Activated CD8-positive, alpha-beta T cell treated with anti-CD3 and anti-CD28 coated beads, Interleukin-2, amount 10 ng/mL, durations not matched to agents 7 days and 5 days (primary cell): ENCODE measurements at regions of chr13 and their contacts with region 1.

Region 1: GRCh38 chr13:29935309-29935981 is 85.0 kb upstream of the UBL3 start:
- DNase-seq: peak; percentile 90
- ATAC-seq: peak; percentile 95
- H3K4me3 Mint-ChIP-seq: peak overlapping the region; percentile 83
- H3K27ac Mint-ChIP-seq: peak overlapping the region; percentile 95
- H3K4me1 Mint-ChIP-seq: peaks cover 44% of the 10 kb centered on the region
- H3K27me3 Mint-ChIP-seq: peaks cover 1% of the 10 kb centered on the region

Region 2: DNA sequence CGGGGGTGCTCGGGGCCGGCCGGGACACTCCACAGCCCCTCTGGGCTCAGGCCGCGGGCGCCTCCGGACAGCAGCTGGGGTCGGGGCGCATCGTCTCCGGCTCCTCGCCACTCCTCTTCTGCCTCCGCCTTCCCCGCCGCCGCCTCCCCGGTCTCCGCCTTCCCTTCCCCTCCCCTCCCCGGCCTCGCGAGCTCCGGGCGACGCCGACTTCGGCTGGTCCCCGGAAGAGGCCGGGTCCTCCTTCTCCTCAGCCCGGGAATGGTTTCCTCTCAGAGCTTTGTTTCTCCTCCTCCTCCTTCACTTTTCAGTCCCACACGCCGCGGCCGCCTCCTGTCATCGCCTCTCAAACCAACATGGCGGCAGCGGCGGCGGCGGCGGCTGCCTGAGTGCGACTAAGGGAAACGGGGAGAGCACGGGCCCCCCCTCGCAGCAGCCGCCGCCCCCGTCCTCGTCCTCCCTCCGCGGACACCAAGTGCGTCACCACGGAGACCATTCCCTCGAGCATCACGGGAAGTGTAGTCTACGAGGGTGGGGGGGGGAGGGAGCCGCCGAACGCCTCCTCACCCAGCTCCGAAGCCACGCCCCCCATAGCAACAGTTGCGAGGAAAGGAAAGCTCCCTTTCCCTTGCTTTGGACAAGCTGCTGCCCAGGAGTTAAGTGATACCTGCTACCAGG is 85.1 kb before region 1 on chr13 and contains the start of gene UBL3:
- CTCF ChIA-PET with region 1: interaction called, 29 read pairs
- POLR2A ChIA-PET with region 1: interaction called, 20 read pairs
- DNase-seq: peak; percentile 96
- ATAC-seq: peak; percentile 89
- H3K4me3 Mint-ChIP-seq: peak within 1 kb of the TSS; percentile 86
- H3K27ac Mint-ChIP-seq: peak within 1 kb of the TSS; percentile 99
- H3K4me1 Mint-ChIP-seq: peaks cover 35% of the 10 kb centered on the region
- H3K27me3 Mint-ChIP-seq: no peaks in the 10 kb centered on the region
- total RNA-seq, gene UBL3: 7.3 to 8.4 TPM

Region 3: GRCh38 chr13:29954082-29955028 is 18.9 kb after region 1 on chr13:
- CTCF ChIA-PET with region 1: interaction called, 43 read pairs
- POLR2A ChIA-PET with region 1: interaction called, 24 read pairs
- DNase-seq: peak; percentile 75
- ATAC-seq: peak; percentile 96
- H3K4me3 Mint-ChIP-seq: peak overlapping the region; percentile 69
- H3K27ac Mint-ChIP-seq: peak overlapping the region; percentile 88
- H3K4me1 Mint-ChIP-seq: peaks cover 52% of the 10 kb centered on the region
- H3K27me3 Mint-ChIP-seq: peaks cover 2% of the 10 kb centered on the region

Region 4: GRCh38 chr13:30078059-30078458 is 142.6 kb after region 1 on chr13:
- CTCF ChIA-PET with region 1: no interaction called
- POLR2A ChIA-PET with region 1: no interaction called
- DNase-seq: peak; percentile 10
- ATAC-seq: no peak
- H3K4me3 Mint-ChIP-seq: no peak overlapping the region
- H3K27ac Mint-ChIP-seq: no peak overlapping the region
- H3K4me1 Mint-ChIP-seq: no peaks in the 10 kb centered on the region
- H3K27me3 Mint-ChIP-seq: peaks cover 6% of the 10 kb centered on the region